Naive thymus-derived CD4-positive, alpha-beta T cell (primary cell): ENCODE measurements at regions of chr18 and their contacts with region 1.

Region 1: GRCh38 chr18:28504100-28504499 is 327.2 kb upstream of the CDH2 start:
- DNase-seq: no peak
- ATAC-seq: no peak
- H3K4me3 ChIP-seq: no peak overlapping the region
- H3K4me3 Mint-ChIP-seq: no peak overlapping the region
- H3K27ac ChIP-seq: no peak overlapping the region
- H3K27ac Mint-ChIP-seq: no peak overlapping the region
- H3K4me1 ChIP-seq: no peaks in the 10 kb centered on the region
- H3K4me1 Mint-ChIP-seq: no peaks in the 10 kb centered on the region
- H3K27me3 ChIP-seq: no peaks in the 10 kb centered on the region
- H3K27me3 Mint-ChIP-seq: no peaks in the 10 kb centered on the region

Region 2: GRCh38 chr18:28560331-28560730 is 56.2 kb after region 1 on chr18:
- CTCF ChIA-PET with region 1: no interaction called
- POLR2A ChIA-PET with region 1: no interaction called
- intact Hi-C with region 1: loop called in 1 of 2 experiments (anchors 10 kb)
- DNase-seq: no peak
- ATAC-seq: no peak
- H3K4me3 ChIP-seq: no peak overlapping the region
- H3K4me3 Mint-ChIP-seq: no peak overlapping the region
- H3K27ac ChIP-seq: no peak overlapping the region
- H3K27ac Mint-ChIP-seq: no peak overlapping the region
- H3K4me1 ChIP-seq: no peaks in the 10 kb centered on the region
- H3K4me1 Mint-ChIP-seq: no peaks in the 10 kb centered on the region
- H3K27me3 ChIP-seq: no peaks in the 10 kb centered on the region
- H3K27me3 Mint-ChIP-seq: no peaks in the 10 kb centered on the region